Spleen (tissue), 13 donors: ENCODE measurements at regions of chr6 and their contacts with region 1.

Region 1: GRCh38 chr6:17987576-17988421 is at the start of gene KIF13A:
- DNase-seq: peak; percentile 93
- H3K4me3 ChIP-seq: peak within 1 kb of the TSS; percentile 50 to 90 (median 70)
- H3K27ac ChIP-seq: peak within 1 kb of the TSS; percentile 89 to 96 (median 94)
- H3K4me1 ChIP-seq: peaks cover 8 to 57% (median 39%) of the 10 kb centered on the region in 6 donors
- H3K27me3 ChIP-seq: peaks cover 0 to 28% (median 0%) of the 10 kb centered on the region in 7 donors
- CTCF ChIP-seq: peak in 7 of 11 experiments; percentile 8 to 47 (median 29)
- POLR2A ChIP-seq: no peak
- total RNA-seq, gene KIF13A: 16.6 to 32.0 (median 21.1) TPM

Region 2: DNA sequence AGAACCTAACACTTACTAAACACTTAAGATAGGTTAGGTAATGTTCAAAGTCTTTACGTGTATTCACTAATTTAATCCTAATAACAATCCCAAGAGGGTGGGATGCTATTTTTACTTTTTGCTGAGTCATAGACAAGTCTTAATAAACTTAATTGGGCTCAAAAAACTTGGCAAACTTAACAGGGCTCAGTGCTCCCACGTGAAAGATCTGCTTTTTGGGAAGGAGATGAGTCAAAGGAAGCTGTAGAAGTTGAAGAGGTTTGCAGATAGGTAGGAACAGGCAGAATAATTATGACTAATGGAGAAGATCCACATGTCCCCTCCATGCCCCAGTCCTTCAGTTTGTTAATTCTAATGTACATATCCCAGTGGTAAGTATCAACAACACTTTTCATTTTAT is 930.5 kb before region 1 on chr6:
- intact Hi-C with region 1: no loop called
- DNase-seq: no peak
- H3K4me3 ChIP-seq: no peak overlapping the region
- H3K27ac ChIP-seq: no peak overlapping the region
- H3K4me1 ChIP-seq: no peaks in the 10 kb centered on the region
- H3K27me3 ChIP-seq: peaks cover 0 to 6% (median 0%) of the 10 kb centered on the region in 7 donors
- CTCF ChIP-seq: no peak
- POLR2A ChIP-seq: no peak

Region 3: GRCh38 chr6:17928514-17929430 is 59.0 kb before region 1 on chr6:
- intact Hi-C with region 1: loop called (anchors 10 kb)
- DNase-seq: no peak
- H3K4me3 ChIP-seq: no peak overlapping the region
- H3K27ac ChIP-seq: no peak overlapping the region
- H3K4me1 ChIP-seq: peaks cover 5 to 47% (median 23%) of the 10 kb centered on the region in 6 donors
- H3K27me3 ChIP-seq: no peaks in the 10 kb centered on the region
- CTCF ChIP-seq: no peak
- POLR2A ChIP-seq: no peak